Caco-2 (cell line): ENCODE measurements at regions of chr9 and their contacts with region 1.

Region 1: GRCh38 chr9:110152704-110153374 is 55.1 kb downstream of the C9orf152 start:
- DNase-seq: peak in 1 of 2 experiments; percentile 68
- H3K4me3 ChIP-seq: no peak overlapping the region
- H3K4me3 Mint-ChIP-seq: no peak overlapping the region
- H3K27ac Mint-ChIP-seq: peak overlapping the region; percentile 34
- H3K4me1 ChIP-seq: 0 out of 2 replicates have a peak, but pooled peaks cover 1% of the 10 kb centered on the region
- H3K4me1 Mint-ChIP-seq: peaks cover 56% of the 10 kb centered on the region
- H3K27me3 ChIP-seq: no peaks in the 10 kb centered on the region
- H3K27me3 Mint-ChIP-seq: no peaks in the 10 kb centered on the region
- CTCF ChIP-seq: peak; percentile 75 to 84

Region 2: DNA sequence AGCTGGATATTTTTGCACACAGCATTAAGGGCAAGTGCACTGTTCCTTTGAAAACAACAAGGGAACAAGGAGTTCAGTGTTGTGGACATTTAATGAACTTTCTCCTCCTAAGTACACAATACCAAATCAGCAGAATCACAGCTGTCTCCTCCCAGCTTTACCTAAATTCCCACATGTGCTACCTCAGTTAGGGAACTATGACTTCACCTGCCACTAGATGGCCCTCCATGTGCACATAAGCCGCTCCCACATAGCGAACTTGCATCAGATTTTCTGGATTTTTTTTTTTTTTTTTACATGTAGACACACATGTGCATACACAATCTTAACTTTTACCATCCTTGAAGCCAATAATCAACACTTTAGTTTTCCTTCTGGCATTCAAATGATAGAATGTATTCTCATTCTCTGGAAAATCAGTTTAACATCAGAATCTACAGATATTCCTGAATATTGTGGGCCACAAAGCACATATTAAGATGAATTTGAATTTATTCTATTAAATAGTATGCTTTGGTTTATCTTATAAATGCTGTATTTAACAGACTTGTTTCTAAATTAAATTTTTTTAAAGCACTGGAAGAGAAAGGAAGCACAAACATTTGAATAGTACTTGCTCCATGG is 249.2 kb before region 1 on chr9:
- CTCF ChIA-PET with region 1: interaction called, 15 read pairs
- POLR2A ChIA-PET with region 1: no interaction called
- intact Hi-C with region 1: loop called (anchors 1 kb)
- DNase-seq: peak; percentile 77 to 81
- H3K4me3 ChIP-seq: no peak overlapping the region
- H3K4me3 Mint-ChIP-seq: no peak overlapping the region
- H3K27ac Mint-ChIP-seq: no peak overlapping the region
- H3K4me1 ChIP-seq: no peaks in the 10 kb centered on the region
- H3K4me1 Mint-ChIP-seq: no peaks in the 10 kb centered on the region
- H3K27me3 ChIP-seq: no peaks in the 10 kb centered on the region
- H3K27me3 Mint-ChIP-seq: peaks cover 7% of the 10 kb centered on the region
- CTCF ChIP-seq: peak; percentile 86 to 87

Region 3: DNA sequence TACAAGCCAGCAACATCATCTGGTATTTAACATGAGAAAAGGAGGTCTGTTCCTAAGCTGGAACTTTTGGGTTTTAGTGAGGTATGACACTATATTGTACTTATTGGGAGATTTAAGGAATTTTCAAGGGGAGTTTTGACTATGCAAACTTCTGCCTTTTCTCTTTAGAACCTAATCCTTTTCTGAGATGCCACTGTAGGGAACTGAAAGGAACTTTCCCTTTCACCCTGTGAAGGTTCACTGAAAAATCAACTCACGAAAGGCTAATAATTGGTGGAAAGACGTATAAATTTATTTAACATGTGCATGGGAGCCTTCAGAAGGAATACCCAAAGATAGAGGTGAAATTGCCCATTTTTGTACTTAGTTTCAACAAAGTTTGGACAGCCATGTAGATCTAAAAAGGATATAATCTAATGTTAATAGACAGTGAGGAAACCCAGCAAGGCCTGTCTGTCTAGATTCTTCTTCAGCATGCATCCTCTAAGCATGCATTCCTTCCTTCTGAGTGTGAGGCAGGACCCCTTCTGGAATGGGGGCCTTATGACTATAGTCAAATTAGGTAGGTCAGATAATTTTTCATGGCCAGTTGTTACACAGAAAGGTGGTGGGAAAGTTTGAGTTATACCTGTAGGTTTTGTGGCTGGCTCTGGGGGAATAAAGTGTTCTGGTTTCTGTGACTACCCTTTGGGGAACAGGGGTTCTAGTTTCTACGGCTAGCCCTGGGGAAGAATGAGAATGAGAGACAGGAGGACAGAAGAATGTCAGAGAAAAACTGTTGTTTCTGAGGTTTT is 145.2 kb before region 1 on chr9:
- CTCF ChIA-PET with region 1: no interaction called
- POLR2A ChIA-PET with region 1: no interaction called
- intact Hi-C with region 1: loop called (anchors 2 kb)
- DNase-seq: no peak
- H3K4me3 ChIP-seq: no peak overlapping the region
- H3K4me3 Mint-ChIP-seq: no peak overlapping the region
- H3K27ac Mint-ChIP-seq: no peak overlapping the region
- H3K4me1 ChIP-seq: peaks cover 22% of the 10 kb centered on the region
- H3K4me1 Mint-ChIP-seq: peaks cover 16% of the 10 kb centered on the region
- H3K27me3 ChIP-seq: no peaks in the 10 kb centered on the region
- H3K27me3 Mint-ChIP-seq: no peaks in the 10 kb centered on the region
- CTCF ChIP-seq: no peak

Region 4: GRCh38 chr9:110069326-110070248 is 83.3 kb before region 1 on chr9:
- CTCF ChIA-PET with region 1: no interaction called
- POLR2A ChIA-PET with region 1: no interaction called
- intact Hi-C with region 1: loop called (anchors 5 kb)
- DNase-seq: no peak
- H3K4me3 ChIP-seq: no peak overlapping the region
- H3K4me3 Mint-ChIP-seq: no peak overlapping the region
- H3K27ac Mint-ChIP-seq: no peak overlapping the region
- H3K4me1 ChIP-seq: peaks cover 29% of the 10 kb centered on the region
- H3K4me1 Mint-ChIP-seq: peaks cover 30% of the 10 kb centered on the region
- H3K27me3 ChIP-seq: no peaks in the 10 kb centered on the region
- H3K27me3 Mint-ChIP-seq: no peaks in the 10 kb centered on the region
- CTCF ChIP-seq: no peak